ENCODE measurements at regions of chr22 and their contacts with region 1.

Region 1: GRCh38 chr22:50525390-50526068 is at the start of gene SCO2:
- DNase-seq: peak; percentile 99
- ATAC-seq: peak; percentile 59
- H3K4me3 Mint-ChIP-seq: peak within 1 kb of the TSS; percentile 94
- H3K27ac Mint-ChIP-seq: peak within 1 kb of the TSS; percentile 88
- H3K4me1 Mint-ChIP-seq: peaks cover 25% of the 10 kb centered on the region
- H3K27me3 Mint-ChIP-seq: no peaks in the 10 kb centered on the region
- CTCF ChIP-seq: no peak
- total RNA-seq, gene SCO2: 2.7 TPM in 1 of 2 experiments, not detected in the other

Region 2: GRCh38 chr22:50417411-50418210 is 107.9 kb before region 1 on chr22:
- CTCF ChIA-PET with region 1: no interaction called
- POLR2A ChIA-PET with region 1: no interaction called
- intact Hi-C with region 1: no loop called
- DNase-seq: no peak
- ATAC-seq: no peak
- H3K4me3 Mint-ChIP-seq: no peak overlapping the region
- H3K27ac Mint-ChIP-seq: no peak overlapping the region
- H3K4me1 Mint-ChIP-seq: no peaks in the 10 kb centered on the region
- H3K27me3 Mint-ChIP-seq: no peaks in the 10 kb centered on the region
- CTCF ChIP-seq: no peak

Region 3: DNA sequence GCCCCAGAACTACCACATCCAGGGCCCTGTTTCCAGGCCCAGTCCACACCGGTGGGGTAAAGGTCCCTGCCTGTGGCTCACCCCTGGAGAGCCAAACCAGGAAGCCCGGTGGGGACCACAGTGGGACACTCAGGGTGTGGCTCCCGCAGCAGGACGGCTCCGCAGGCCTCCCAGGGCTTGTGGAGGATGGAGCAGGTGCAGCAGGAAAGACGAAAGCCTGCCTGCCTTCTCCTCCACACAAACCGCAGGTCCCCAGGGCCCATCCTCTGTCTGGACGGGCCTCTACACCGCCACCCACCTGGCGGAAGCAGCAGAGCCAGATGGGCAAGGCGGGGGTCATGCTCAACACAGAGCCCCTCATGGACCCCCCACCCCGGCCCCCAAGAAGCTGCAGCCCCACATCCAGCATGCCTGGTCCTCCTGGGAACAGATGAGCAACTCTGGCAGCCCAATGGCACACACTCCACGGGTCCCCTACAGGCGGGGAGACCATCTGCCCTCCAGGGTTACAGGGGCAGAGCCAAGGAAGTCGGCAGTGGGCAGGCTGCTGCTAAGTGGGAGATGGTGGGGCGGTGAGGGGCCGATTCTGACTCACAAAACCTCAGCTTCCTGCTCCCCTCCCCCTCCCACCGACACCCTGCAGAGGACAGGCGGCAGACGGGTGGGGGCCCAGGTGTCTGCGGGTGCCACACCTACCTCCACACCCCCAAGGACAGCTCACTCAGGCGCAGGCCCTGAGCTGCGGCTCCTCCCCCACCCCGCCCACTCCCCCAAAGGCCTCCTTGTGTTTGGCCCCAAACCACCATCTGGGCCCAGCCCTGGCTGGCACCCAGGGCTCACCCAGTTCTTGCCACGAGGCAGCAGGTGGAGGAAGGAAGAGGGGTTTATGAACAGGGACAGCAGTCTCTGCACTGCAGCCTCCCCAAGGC is 55.9 kb before region 1 on chr22:
- CTCF ChIA-PET with region 1: interaction called, 15 read pairs
- POLR2A ChIA-PET with region 1: interaction called, 38 read pairs
- intact Hi-C with region 1: no loop called
- DNase-seq: peak; percentile 99
- ATAC-seq: peak; percentile 86
- H3K4me3 Mint-ChIP-seq: peak overlapping the region; percentile 70
- H3K27ac Mint-ChIP-seq: peak overlapping the region; percentile 95
- H3K4me1 Mint-ChIP-seq: peaks cover 75% of the 10 kb centered on the region
- H3K27me3 Mint-ChIP-seq: no peaks in the 10 kb centered on the region
- CTCF ChIP-seq: peak; percentile 39

Region 4: GRCh38 chr22:50498322-50498890 is 27.1 kb before region 1 on chr22:
- CTCF ChIA-PET with region 1: interaction called, 80 read pairs
- POLR2A ChIA-PET with region 1: interaction called, 5 read pairs
- intact Hi-C with region 1: no loop called
- DNase-seq: peak; percentile 80
- ATAC-seq: peak; percentile 95
- H3K4me3 Mint-ChIP-seq: no peak overlapping the region
- H3K27ac Mint-ChIP-seq: no peak overlapping the region
- H3K4me1 Mint-ChIP-seq: no peaks in the 10 kb centered on the region
- H3K27me3 Mint-ChIP-seq: no peaks in the 10 kb centered on the region
- CTCF ChIP-seq: peak; percentile 79

Region 5: GRCh38 chr22:50537765-50538164 is 12.2 kb after region 1 on chr22:
- CTCF ChIA-PET with region 1: interaction called, 65 read pairs
- POLR2A ChIA-PET with region 1: interaction called, 175 read pairs
- intact Hi-C with region 1: no loop called
- DNase-seq: no peak
- ATAC-seq: no peak
- H3K4me3 Mint-ChIP-seq: no peak overlapping the region
- H3K27ac Mint-ChIP-seq: peak overlapping the region; percentile 100
- H3K4me1 Mint-ChIP-seq: peaks cover 60% of the 10 kb centered on the region
- H3K27me3 Mint-ChIP-seq: no peaks in the 10 kb centered on the region
- CTCF ChIP-seq: no peak

Region 6: DNA sequence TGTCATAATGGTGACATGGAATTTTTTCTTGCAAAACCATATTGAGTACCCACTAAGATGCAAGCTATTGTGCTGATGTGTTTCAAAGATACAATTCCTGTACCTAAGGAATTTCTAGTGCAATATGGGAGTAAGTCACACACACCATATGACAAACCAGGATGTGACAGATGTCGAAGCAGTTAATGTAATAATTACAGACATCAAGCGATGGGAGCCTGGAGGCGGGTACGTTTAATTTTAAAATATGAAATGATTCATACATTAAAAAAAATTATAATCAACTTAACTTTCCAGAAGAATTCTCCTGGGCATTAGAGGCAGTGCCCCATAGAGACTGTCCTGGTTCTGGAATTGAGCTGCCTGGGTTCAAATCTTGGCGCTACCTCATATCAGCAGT is 31.2 kb after region 1 on chr22:
- CTCF ChIA-PET with region 1: interaction called, 17 read pairs
- POLR2A ChIA-PET with region 1: interaction called, 17 read pairs
- intact Hi-C with region 1: no loop called
- DNase-seq: no peak
- ATAC-seq: no peak
- H3K4me3 Mint-ChIP-seq: no peak overlapping the region
- H3K27ac Mint-ChIP-seq: no peak overlapping the region
- H3K4me1 Mint-ChIP-seq: peaks cover 8% of the 10 kb centered on the region
- H3K27me3 Mint-ChIP-seq: no peaks in the 10 kb centered on the region
- CTCF ChIP-seq: no peak

Region 7: DNA sequence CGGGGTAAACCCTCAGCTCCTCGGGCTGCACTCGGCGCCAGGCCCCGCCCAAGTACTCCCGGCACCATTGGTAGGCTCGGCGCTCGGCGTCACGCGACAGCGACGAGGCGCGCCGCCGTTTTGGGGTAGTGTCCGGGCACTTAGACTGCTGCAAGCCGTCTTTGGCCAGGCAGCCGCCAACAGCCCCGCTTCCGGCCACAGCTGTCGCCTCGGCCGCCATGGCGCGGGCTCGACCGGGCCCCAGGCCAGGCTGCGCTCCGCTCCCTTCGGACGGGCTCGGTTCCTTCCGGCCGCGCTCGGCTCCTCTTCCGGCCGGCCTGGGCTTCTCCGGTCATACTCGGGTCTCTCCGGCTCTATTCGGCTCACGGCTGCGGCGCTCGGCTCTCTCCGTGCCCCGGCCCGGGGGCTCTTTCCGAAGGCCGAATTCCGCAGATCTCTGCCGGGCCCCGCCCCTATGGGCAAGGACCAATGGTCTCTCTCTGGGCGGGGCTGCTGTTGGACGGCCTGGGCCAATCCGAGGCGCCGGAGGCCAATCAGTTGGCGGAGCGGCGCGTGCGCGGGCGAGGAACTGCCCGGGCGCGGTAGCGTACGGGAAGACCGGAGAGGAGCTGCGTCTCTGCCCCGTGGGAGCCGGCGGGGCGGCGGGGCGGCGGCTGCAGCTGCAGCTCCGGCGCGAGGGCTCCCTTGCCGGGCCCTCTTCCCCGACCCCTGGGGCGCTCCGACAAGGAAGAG is 57.2 kb after region 1 on chr22 and contains the start of gene CHKB:
- CTCF ChIA-PET with region 1: interaction called, 19 read pairs
- POLR2A ChIA-PET with region 1: interaction called, 12 read pairs
- intact Hi-C with region 1: loop called (anchors 5 kb)
- DNase-seq: peak; percentile 99
- ATAC-seq: peak; percentile 97
- H3K4me3 Mint-ChIP-seq: peak within 1 kb of the TSS; percentile 92
- H3K27ac Mint-ChIP-seq: peak within 1 kb of the TSS; percentile 89
- H3K4me1 Mint-ChIP-seq: peaks cover 24% of the 10 kb centered on the region
- H3K27me3 Mint-ChIP-seq: no peaks in the 10 kb centered on the region
- CTCF ChIP-seq: no peak
- total RNA-seq, gene CHKB: 55.6 to 60.3 TPM

Region 8: DNA sequence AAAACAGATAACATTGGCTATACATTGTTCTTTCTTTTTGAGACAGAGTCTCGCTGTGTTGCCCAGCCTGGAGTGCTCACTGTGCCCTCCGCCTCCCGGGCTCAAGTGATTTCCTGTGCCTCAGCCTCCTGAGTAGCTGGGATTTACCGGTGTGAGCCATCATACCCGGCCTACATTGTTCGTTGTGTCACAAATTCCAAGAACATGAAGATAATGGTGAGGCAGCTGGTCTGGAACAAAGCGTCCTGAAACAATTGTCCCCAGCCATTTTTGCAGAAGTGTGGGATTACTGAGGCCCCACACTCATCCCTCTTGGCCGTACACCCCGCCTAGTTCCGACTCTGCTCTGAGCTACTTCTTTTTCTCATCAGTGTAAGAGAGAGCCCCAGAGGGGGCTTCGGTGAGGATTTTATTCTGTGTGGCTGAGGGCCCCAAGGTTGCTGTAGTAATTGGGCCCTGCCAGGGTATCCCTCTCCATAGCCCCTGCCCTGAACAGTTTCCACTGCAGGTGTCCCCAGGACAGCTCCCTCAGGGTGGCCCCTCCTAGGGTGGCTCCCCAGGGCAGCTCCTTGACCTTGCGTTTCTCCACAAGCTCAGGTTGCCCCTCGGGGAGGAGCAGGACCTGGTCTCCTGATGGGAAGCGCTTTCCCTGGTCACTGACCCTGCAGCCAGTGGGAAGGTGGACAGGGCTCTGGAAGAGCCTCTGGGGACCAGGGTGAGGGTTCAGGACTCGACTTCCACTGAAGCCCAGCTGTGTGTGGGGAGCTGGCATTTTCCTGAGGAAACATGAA is 115.5 kb after region 1 on chr22:
- CTCF ChIA-PET with region 1: no interaction called
- POLR2A ChIA-PET with region 1: no interaction called
- intact Hi-C with region 1: no loop called
- DNase-seq: no peak
- ATAC-seq: no peak
- H3K4me3 Mint-ChIP-seq: no peak overlapping the region
- H3K27ac Mint-ChIP-seq: no peak overlapping the region
- H3K4me1 Mint-ChIP-seq: no peaks in the 10 kb centered on the region
- H3K27me3 Mint-ChIP-seq: peaks cover 4% of the 10 kb centered on the region
- CTCF ChIP-seq: no peak

Region 9: GRCh38 chr22:50688448-50688847 is 162.9 kb after region 1 on chr22:
- CTCF ChIA-PET with region 1: no interaction called
- POLR2A ChIA-PET with region 1: no interaction called
- intact Hi-C with region 1: no loop called
- DNase-seq: no peak
- ATAC-seq: no peak
- H3K4me3 Mint-ChIP-seq: no peak overlapping the region
- H3K27ac Mint-ChIP-seq: no peak overlapping the region
- H3K4me1 Mint-ChIP-seq: no peaks in the 10 kb centered on the region
- H3K27me3 Mint-ChIP-seq: peaks cover 4% of the 10 kb centered on the region
- CTCF ChIP-seq: no peak

Measured in activated CD8-positive, alpha-beta T cell treated with anti-CD3 and anti-CD28 coated beads for 36 hours (primary cell).